ENCODE measurements at regions of chr2 and their contacts with region 1.

Region 1: DNA sequence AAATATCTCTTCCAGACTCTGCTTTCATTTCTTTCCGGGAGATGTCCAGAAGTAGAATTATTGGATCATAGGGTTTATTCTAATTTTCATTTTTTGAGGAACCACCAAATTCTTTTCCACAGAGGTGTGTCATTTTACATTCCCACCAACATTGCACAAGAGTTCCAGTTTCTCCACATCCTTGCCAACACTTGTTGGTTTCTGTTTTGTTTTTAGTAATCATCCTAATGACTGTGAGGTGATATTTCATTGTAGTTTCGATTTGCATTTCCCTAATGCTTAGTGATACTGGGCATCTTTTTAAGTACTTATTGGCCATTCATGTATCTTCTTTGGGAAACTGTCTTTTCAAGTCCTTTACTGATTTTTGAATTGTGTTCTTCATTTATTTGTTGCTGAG is 513.1 kb downstream of the PARD3B start:
- DNase-seq: no peak
- H3K4me3 Mint-ChIP-seq: no peak overlapping the region
- H3K27ac Mint-ChIP-seq: no peak overlapping the region
- H3K4me1 Mint-ChIP-seq: peaks cover 27% of the 10 kb centered on the region
- H3K27me3 Mint-ChIP-seq: no peaks in the 10 kb centered on the region

Region 2: DNA sequence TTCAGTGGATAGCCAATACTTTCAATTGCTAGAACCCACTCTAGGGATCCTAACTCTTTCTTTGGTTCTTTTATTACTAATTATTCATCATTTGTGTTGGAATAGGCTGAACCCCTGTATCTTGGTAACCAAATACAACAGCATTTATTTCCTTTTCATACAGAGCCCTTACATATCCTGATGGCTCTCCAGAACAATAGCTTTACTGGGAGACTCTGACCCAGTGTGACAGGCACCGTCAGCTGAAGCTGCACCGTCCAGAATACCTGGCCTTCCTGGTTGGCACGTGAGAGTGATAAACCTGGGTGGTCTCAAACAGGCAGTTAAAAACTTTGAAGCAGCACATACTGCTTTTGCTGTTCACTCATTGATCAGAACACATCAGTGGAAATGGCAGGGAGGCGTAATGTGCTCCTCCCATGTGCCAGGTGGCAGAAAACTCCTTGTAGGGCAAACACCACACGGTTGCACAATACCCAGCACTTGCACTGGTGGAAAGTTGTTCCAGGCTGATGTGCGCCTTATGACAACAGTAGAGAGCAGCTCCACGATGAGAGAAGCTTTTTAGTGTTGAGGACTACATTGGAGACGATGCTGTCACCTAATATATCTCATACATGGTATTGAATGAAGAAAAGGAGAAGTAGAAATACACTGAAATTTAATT is 57.0 kb before region 1 on chr2:
- CTCF ChIA-PET with region 1: no interaction called
- intact Hi-C with region 1: no loop called
- DNase-seq: no peak
- H3K4me3 Mint-ChIP-seq: no peak overlapping the region
- H3K27ac Mint-ChIP-seq: no peak overlapping the region
- H3K4me1 Mint-ChIP-seq: peaks cover 18% of the 10 kb centered on the region
- H3K27me3 Mint-ChIP-seq: no peaks in the 10 kb centered on the region

Region 3: GRCh38 chr2:205077159-205077558 is 18.8 kb after region 1 on chr2:
- CTCF ChIA-PET with region 1: interaction called, 3 read pairs
- intact Hi-C with region 1: loop called (anchors 2 kb)
- DNase-seq: peak; percentile 9
- H3K4me3 Mint-ChIP-seq: peak overlapping the region; percentile 46
- H3K27ac Mint-ChIP-seq: peak overlapping the region; percentile 50
- H3K4me1 Mint-ChIP-seq: peaks cover 53% of the 10 kb centered on the region
- H3K27me3 Mint-ChIP-seq: no peaks in the 10 kb centered on the region

Measured in activated naive CD4-positive, alpha-beta T cell treated with anti-CD3 and anti-CD28 coated beads for 36 hours (primary cell).